H1 (cell line): ENCODE measurements at regions of chr6 and their contacts with region 1.

Region 1: GRCh38 chr6:140052756-140053729 is 678.6 kb upstream of the CITED2 start:
- DNase-seq: no peak
- H3K4me3 ChIP-seq: no peak overlapping the region
- H3K27ac ChIP-seq: no peak overlapping the region
- H3K4me1 ChIP-seq: peaks cover 1 to 12% (median 7%) of the 10 kb centered on the region in 4 experiments; a peak in 4 of 7 replicates
- H3K27me3 ChIP-seq: no peaks in the 10 kb centered on the region
- CTCF ChIP-seq: peak in 2 of 3 experiments; percentile 40 to 60; a peak in 3 of 4 replicates
- EP300 ChIP-seq: no peak
- POLR2A ChIP-seq: no peak
- RAD21 ChIP-seq: peak; percentile 63 to 72

Region 2: GRCh38 chr6:139812939-139813338 is 240.1 kb before region 1 on chr6:
- CTCF ChIA-PET with region 1: no interaction called
- POLR2A ChIA-PET with region 1: no interaction called
- DNase-seq: no peak
- H3K4me3 ChIP-seq: no peak overlapping the region
- H3K27ac ChIP-seq: no peak overlapping the region
- H3K4me1 ChIP-seq: no peaks in the 10 kb centered on the region
- H3K27me3 ChIP-seq: no peaks in the 10 kb centered on the region
- CTCF ChIP-seq: no peak
- EP300 ChIP-seq: no peak
- POLR2A ChIP-seq: no peak
- RAD21 ChIP-seq: no peak

Region 3: DNA sequence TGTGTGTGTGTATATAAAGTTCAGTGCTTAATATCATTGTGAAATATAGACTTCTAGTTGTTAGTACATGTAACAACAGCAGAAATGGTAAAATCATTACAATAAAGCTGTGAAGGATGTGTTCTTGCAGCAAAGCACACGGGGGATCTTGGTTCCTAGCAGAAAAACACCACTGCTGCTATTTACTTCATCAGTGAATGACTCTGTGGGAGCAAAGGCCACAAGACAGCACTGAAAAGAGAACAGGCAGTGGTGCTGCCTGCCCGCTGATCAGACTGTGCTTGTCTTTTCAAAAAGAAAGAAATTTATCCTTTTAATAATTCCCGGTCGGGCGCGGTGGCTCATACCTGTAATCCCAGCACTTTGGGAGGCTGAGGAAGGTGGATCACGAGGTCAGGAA is 11.3 kb after region 1 on chr6:
- CTCF ChIA-PET with region 1: interaction called, 14 read pairs
- POLR2A ChIA-PET with region 1: no interaction called
- DNase-seq: no peak
- H3K4me3 ChIP-seq: no peak overlapping the region
- H3K27ac ChIP-seq: no peak overlapping the region
- H3K4me1 ChIP-seq: no peaks in the 10 kb centered on the region
- H3K27me3 ChIP-seq: no peaks in the 10 kb centered on the region
- CTCF ChIP-seq: no peak
- EP300 ChIP-seq: no peak
- POLR2A ChIP-seq: no peak
- RAD21 ChIP-seq: no peak

Region 4: GRCh38 chr6:140236732-140237131 is 183.7 kb after region 1 on chr6:
- CTCF ChIA-PET with region 1: no interaction called
- POLR2A ChIA-PET with region 1: no interaction called
- DNase-seq: no peak
- H3K4me3 ChIP-seq: no peak overlapping the region
- H3K27ac ChIP-seq: no peak overlapping the region
- H3K4me1 ChIP-seq: no peaks in the 10 kb centered on the region
- H3K27me3 ChIP-seq: no peaks in the 10 kb centered on the region
- CTCF ChIP-seq: no peak
- EP300 ChIP-seq: no peak
- POLR2A ChIP-seq: no peak
- RAD21 ChIP-seq: no peak